Activated naive CD4-positive, alpha-beta T cell treated with anti-CD3 and anti-CD28 coated beads for 36 hours (primary cell): ENCODE measurements at regions of chr11 and their contacts with region 1.

Region 1: GRCh38 chr11:129695575-129696308 is 119.9 kb upstream of the TMEM45B start:
- DNase-seq: peak; percentile 80
- H3K4me3 Mint-ChIP-seq: peak overlapping the region; percentile 71
- H3K27ac Mint-ChIP-seq: peak overlapping the region; percentile 44
- H3K4me1 Mint-ChIP-seq: peaks cover 12% of the 10 kb centered on the region
- H3K27me3 Mint-ChIP-seq: no peaks in the 10 kb centered on the region

Region 2: GRCh38 chr11:129375751-129376657 is 319.7 kb before region 1 on chr11 and contains the start of gene BARX2:
- CTCF ChIA-PET with region 1: interaction called, 31 read pairs
- intact Hi-C with region 1: loop called (anchors 1 kb)
- DNase-seq: peak; percentile 77
- H3K4me3 Mint-ChIP-seq: peak within 1 kb of the TSS; percentile 71
- H3K27ac Mint-ChIP-seq: no peak within 1 kb of the TSS
- H3K4me1 Mint-ChIP-seq: peaks cover 24% of the 10 kb centered on the region
- H3K27me3 Mint-ChIP-seq: peaks cover 70% of the 10 kb centered on the region
- total RNA-seq, gene BARX2: 3.2 to 3.8 TPM

Region 3: DNA sequence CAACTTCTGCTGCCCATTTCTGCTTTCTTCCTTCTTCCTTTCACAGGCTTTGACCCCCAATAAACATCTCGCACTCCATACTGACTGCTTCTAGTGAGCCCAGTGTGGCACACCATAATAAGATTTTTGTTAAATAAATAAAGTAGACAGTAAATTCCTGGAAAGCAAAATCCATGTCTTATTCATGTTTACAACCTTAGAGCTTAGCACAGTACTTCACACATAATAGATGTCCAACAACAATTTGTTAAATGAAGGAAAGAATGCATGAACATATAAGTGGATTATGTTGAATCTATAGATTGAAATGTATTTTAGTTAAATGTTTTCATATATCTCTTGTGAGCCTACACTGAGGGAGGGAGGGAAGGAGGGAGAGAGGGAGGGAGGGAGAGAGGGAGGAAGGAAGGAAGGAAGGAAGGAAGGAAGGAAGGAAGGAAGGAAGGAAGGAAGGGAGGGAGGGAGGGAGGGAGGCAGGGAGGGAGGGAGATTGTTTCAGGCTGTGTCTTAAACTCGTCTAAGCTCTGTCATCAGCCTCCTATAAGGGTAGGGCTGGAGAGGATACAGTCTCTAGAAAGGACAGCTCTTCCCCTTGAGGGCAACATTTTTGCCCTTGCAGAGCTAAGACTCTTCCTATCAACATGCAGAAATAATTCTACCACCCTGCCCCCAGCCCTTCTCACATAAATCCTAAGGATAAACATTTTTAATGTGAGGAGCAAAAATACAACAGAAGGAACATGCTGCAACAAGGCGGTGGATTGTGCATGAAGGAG is 152.0 kb before region 1 on chr11:
- CTCF ChIA-PET with region 1: no interaction called
- intact Hi-C with region 1: loop called (anchors 5 kb)
- DNase-seq: no peak
- H3K4me3 Mint-ChIP-seq: no peak overlapping the region
- H3K27ac Mint-ChIP-seq: no peak overlapping the region
- H3K4me1 Mint-ChIP-seq: no peaks in the 10 kb centered on the region
- H3K27me3 Mint-ChIP-seq: peaks cover 6% of the 10 kb centered on the region

Region 4: DNA sequence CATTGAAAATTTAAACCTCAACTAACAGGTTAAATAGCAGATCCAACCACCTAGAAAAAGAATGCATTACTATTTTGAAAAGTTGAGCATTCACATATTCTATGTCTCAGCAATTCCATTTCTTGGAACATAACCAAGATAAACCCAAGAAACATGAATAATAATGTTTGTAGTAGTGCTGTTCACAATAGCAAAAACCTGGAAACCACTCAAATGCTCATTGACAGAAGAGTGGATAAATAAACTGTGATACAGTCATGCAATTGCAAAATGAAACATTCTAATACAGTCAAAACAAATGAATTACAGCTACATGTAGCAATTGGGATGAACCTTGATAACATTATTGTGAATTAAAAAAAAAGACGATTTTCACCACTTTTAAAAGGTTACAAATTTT is 42.9 kb before region 1 on chr11:
- CTCF ChIA-PET with region 1: no interaction called
- intact Hi-C with region 1: no loop called
- DNase-seq: no peak
- H3K4me3 Mint-ChIP-seq: no peak overlapping the region
- H3K27ac Mint-ChIP-seq: no peak overlapping the region
- H3K4me1 Mint-ChIP-seq: peaks cover 9% of the 10 kb centered on the region
- H3K27me3 Mint-ChIP-seq: no peaks in the 10 kb centered on the region